ENCODE measurements at regions of chr10 and their contacts with region 1.

Region 1: DNA sequence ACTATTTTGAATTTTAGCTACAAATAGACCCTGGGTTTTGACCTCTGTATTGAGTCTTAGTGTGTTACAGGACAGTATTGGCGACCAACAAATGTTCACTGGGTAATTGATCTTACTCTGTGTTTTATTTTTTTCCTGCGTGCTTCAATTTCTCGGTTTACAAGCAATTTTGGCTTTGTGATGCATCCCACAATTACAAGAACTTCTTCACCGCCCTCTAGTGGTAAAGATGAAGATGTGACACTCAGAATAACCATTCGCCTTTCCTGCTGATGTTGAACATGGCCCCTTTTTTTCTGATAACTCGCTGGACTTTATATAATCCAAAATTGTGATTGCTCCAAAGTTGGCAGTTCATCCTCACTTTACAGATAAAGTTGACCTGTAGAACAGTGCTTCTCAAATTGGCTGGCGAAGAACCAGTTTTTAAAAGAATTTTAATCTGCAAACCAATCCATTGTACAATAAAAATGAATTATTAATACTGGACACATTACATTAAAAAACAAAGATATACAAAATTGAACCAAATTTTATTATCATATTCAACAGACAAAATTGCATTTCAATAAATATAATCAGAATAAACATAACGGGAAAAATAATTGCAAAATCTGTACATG is 20.2 kb upstream of the SMC3 start:
- DNase-seq: no peak
- ATAC-seq: peak; percentile 76
- H3K4me3 ChIP-seq: no peak overlapping the region
- H3K27ac ChIP-seq: no peak overlapping the region
- H3K4me1 ChIP-seq: no peaks in the 10 kb centered on the region
- H3K27me3 ChIP-seq: no peaks in the 10 kb centered on the region
- CTCF ChIP-seq: peak; percentile 65 to 83 (median 79)
- POLR2A ChIP-seq: no peak

Region 2: DNA sequence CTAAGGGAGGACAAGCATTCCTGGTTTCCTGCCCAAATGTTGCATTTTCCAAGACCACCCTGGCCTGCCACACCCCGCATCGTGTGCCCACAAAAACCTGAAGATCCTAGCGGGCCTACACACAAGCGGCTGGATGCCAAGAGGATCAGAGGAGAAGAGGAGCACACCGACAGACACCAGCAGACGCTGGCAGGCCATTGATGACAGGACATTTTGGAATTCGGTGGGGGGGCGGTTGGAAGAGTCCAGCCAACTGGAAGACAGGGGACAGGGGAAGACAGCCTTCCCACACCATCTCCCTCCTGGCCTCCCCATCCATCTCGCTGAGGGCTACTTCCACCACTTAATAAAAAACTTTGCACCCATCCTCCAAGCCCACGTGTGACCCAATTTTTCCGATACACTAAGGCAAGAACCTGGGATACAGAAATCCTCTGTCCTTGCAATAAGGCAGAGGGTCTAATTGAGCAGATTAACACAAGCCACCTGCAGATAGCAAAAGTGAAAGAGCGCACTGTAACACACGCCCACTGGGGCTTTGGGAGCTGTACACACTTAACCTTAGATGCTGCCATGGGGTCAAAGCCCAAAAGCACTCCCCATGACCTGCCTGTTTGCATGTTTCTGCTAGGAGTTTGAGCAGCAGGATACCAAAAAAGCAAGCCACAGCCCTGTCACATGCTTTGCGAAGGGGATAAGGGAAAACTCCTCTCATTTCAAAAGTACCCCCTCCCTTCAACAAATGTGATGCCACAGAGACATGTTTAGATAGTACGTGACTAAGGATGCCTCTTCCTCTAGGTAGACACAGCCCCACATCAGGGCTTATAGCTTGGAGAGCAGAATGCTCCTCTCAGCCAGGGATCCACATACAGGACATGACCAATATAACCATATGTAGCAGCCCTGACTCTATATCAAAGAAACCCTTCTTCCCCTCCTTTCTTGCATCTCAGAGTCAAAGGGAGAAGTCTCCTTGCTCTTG is 229.1 kb before region 1 on chr10:
- intact Hi-C with region 1: loop called (anchors 5 kb)
- DNase-seq: no peak
- ATAC-seq: no peak
- H3K4me3 ChIP-seq: no peak overlapping the region
- H3K27ac ChIP-seq: no peak overlapping the region
- H3K4me1 ChIP-seq: no peaks in the 10 kb centered on the region
- H3K27me3 ChIP-seq: no peaks in the 10 kb centered on the region
- CTCF ChIP-seq: no peak
- POLR2A ChIP-seq: no peak

Region 3: DNA sequence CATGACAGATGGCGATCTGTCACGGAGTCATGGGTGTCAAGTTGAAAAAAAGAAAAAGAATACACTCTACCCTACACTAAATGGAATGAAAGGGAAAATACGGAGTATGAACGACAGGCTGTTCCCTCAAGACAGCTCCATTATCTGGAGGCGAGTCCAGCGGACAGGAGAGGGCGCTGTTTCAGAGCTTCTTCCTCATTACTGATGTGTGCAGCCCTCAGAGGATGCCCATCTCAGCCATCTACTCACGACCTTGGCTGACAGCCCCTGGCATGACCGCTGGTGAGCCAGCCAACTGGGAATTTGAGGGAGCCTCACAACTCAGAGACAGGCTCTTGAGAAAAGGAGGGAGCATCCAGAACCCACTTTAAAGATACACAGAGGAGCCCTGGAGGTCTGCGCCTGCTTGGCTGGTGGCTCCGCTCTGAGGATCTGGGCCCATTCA is 192.9 kb before region 1 on chr10:
- intact Hi-C with region 1: loop called (anchors 10 kb)
- DNase-seq: peak; percentile 75 to 83 (median 80)
- ATAC-seq: peak; percentile 67
- H3K4me3 ChIP-seq: no peak overlapping the region
- H3K27ac ChIP-seq: no peak overlapping the region
- H3K4me1 ChIP-seq: peaks cover 10% of the 10 kb centered on the region
- H3K27me3 ChIP-seq: no peaks in the 10 kb centered on the region
- CTCF ChIP-seq: peak; percentile 42 to 79 (median 63)
- POLR2A ChIP-seq: no peak

Region 4: GRCh38 chr10:110414563-110415309 is 132.5 kb before region 1 on chr10:
- intact Hi-C with region 1: no loop called
- DNase-seq: peak in 3 of 4 donors; percentile 23 to 41 (median 30)
- ATAC-seq: no peak
- H3K4me3 ChIP-seq: no peak overlapping the region
- H3K27ac ChIP-seq: no peak overlapping the region
- H3K4me1 ChIP-seq: peaks cover 13% of the 10 kb centered on the region
- H3K27me3 ChIP-seq: no peaks in the 10 kb centered on the region
- CTCF ChIP-seq: no peak
- POLR2A ChIP-seq: no peak